KBM-7 (cell line): ENCODE measurements at regions of chr15 and their contacts with region 1.

Region 1: GRCh38 chr15:33737687-33738601 is 230.4 kb upstream of the CHRM5 start:
- DNase-seq: peak; percentile 58

Region 2: GRCh38 chr15:33994005-33994615 is 256.2 kb after region 1 on chr15:
- in situ Hi-C with region 1: loop called (anchors 25 kb)
- DNase-seq: peak; percentile 26